GM12878 (cell line): ENCODE measurements at regions of chr12 and their contacts with region 1.

Region 1: GRCh38 chr12:761256-761655 is 8.9 kb downstream of the WNK1 start:
- DNase-seq: no peak
- ATAC-seq: no peak
- H3K4me3 ChIP-seq: peak overlapping the region; percentile 28
- H3K27ac ChIP-seq: no peak overlapping the region
- H3K4me1 ChIP-seq: no peaks in the 10 kb centered on the region; the same call in 1 of the 2 replicates
- H3K27me3 ChIP-seq: no peaks in the 10 kb centered on the region
- CTCF ChIP-seq: no peak
- EP300 ChIP-seq: no peak
- POLR2A ChIP-seq: no peak
- RAD21 ChIP-seq: no peak

Region 2: DNA sequence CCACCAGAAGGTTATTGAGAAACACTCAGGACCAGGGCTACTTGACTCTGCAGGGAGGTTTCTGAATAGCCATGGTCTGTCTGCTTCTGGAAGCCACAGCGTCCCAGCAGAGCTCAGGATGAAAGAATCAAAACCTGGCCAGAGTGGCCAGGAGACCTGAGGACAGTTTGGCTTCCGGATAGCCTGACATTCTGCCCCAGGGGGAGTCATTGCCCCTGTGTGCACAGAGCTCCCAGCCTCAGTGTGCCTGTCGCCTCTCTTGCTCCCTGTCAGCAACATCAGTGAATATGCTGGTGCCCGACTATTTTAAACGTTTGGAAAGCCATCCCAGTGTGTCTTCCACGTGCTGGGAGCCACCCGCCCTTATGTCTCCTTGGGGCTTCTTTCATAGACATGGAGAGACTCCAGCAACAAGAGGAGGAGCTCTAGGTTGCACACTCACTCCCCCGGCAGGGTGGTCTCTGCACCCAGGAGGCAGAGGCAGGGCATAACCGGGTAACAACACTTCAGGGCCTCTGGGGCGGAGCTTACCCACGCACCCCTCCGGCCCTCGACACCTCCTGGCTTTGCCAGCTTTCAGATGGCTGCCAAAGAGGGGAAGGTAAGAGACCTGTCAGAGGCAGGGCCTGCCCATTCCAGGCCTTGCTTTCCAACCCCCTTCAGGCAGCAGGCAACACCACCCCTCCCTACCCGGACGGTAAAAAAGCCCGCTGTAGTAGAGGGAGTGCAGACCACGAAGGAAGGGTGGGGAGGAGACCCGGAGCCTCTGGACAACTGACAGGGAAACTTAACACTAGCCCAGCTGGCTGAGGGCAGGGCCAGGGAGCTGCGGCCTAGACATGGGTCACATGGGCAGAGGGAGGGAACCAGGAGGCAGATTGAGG is 528.3 kb before region 1 on chr12:
- CTCF ChIA-PET with region 1: no interaction called
- POLR2A ChIA-PET with region 1: no interaction called
- RAD21 ChIA-PET with region 1: no interaction called
- SMC1A ChIA-PET with region 1: no interaction called
- in situ Hi-C with region 1: no loop called
- intact Hi-C with region 1: no loop called
- DNase-seq: no peak
- ATAC-seq: no peak
- H3K4me3 ChIP-seq: no peak overlapping the region
- H3K27ac ChIP-seq: no peak overlapping the region
- H3K4me1 ChIP-seq: no peaks in the 10 kb centered on the region
- H3K27me3 ChIP-seq: peaks cover 0 to 1% of the 10 kb centered on the region in 2 experiments; a peak in 1 of 4 replicates
- CTCF ChIP-seq: no peak
- EP300 ChIP-seq: no peak
- POLR2A ChIP-seq: no peak
- RAD21 ChIP-seq: no peak

Region 3: DNA sequence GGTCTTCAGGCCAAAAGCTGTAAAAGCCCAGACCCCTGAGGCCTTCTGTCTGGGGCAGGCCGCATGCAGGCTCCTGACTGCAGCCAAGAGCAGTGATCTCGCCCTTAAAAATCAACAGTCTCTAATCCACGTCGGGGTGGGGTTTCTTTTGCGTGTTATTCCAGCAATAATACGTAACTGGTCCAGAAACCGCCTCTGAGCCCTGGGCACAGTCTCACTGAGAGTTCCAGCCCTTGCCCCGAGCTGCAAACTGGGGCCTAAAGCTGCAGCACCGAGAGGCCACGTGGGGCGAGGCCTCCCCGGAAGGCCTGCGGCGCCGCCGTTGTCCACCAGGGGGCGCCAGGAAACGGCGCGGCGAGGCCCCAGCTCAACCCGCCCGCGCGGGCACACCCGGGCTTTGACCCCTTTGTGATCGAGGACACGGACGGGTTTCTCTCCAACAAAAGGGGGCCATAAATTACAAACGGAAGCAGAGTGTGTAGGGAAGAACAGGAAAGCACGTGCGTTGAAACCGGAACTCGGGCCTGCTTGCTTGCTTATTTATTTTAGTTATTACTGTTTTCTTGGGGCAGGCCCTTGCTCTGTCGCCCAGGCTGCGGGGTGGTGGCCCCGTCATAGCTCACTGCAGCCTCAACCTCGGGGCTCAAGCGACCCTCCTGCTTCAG is 185.2 kb before region 1 on chr12:
- CTCF ChIA-PET with region 1: interaction called, 11 read pairs
- POLR2A ChIA-PET with region 1: no interaction called
- RAD21 ChIA-PET with region 1: interaction called, 7 read pairs
- SMC1A ChIA-PET with region 1: interaction called, 3 read pairs
- in situ Hi-C with region 1: no loop called
- intact Hi-C with region 1: no loop called
- DNase-seq: peak; percentile 40
- ATAC-seq: peak; percentile 99
- H3K4me3 ChIP-seq: no peak overlapping the region
- H3K27ac ChIP-seq: peak overlapping the region; percentile 26
- H3K4me1 ChIP-seq: peaks cover 10% of the 10 kb centered on the region
- H3K27me3 ChIP-seq: no peaks in the 10 kb centered on the region
- CTCF ChIP-seq: peak; percentile 90 to 99 (median 96)
- EP300 ChIP-seq: no peak
- POLR2A ChIP-seq: peak; percentile 59
- RAD21 ChIP-seq: peak; percentile 79

Region 4: GRCh38 chr12:614411-614970 is 146.8 kb before region 1 on chr12:
- CTCF ChIA-PET with region 1: interaction called, 13 read pairs
- POLR2A ChIA-PET with region 1: interaction called, 6 read pairs
- RAD21 ChIA-PET with region 1: interaction called, 9 read pairs
- SMC1A ChIA-PET with region 1: interaction called, 15 read pairs
- in situ Hi-C with region 1: no loop called
- intact Hi-C with region 1: no loop called
- DNase-seq: no peak
- ATAC-seq: peak; percentile 78
- H3K4me3 ChIP-seq: no peak overlapping the region
- H3K27ac ChIP-seq: no peak overlapping the region
- H3K4me1 ChIP-seq: peaks cover 10% of the 10 kb centered on the region
- H3K27me3 ChIP-seq: no peaks in the 10 kb centered on the region
- CTCF ChIP-seq: peak; percentile 61 to 86 (median 63)
- EP300 ChIP-seq: no peak
- POLR2A ChIP-seq: no peak
- RAD21 ChIP-seq: peak; percentile 75

Region 5: GRCh38 chr12:774051-774614 is 12.9 kb after region 1 on chr12:
- CTCF ChIA-PET with region 1: interaction called, 11 read pairs
- POLR2A ChIA-PET with region 1: interaction called, 13 read pairs
- RAD21 ChIA-PET with region 1: interaction called, 7 read pairs
- SMC1A ChIA-PET with region 1: interaction called, 42 read pairs
- in situ Hi-C with region 1: no loop called
- intact Hi-C with region 1: no loop called
- DNase-seq: no peak
- ATAC-seq: 0 out of 3 replicates have a peak, but pooled peaks have one; percentile 12
- H3K4me3 ChIP-seq: no peak overlapping the region
- H3K27ac ChIP-seq: no peak overlapping the region
- H3K4me1 ChIP-seq: peaks cover 4% of the 10 kb centered on the region; the same call in 1 of the 2 replicates
- H3K27me3 ChIP-seq: no peaks in the 10 kb centered on the region
- CTCF ChIP-seq: no peak
- EP300 ChIP-seq: no peak
- POLR2A ChIP-seq: no peak
- RAD21 ChIP-seq: no peak

Region 6: GRCh38 chr12:823028-823698 is 61.9 kb after region 1 on chr12:
- CTCF ChIA-PET with region 1: interaction called, 64 read pairs
- POLR2A ChIA-PET with region 1: no interaction called
- RAD21 ChIA-PET with region 1: interaction called, 4 read pairs
- SMC1A ChIA-PET with region 1: interaction called, 73 read pairs
- in situ Hi-C with region 1: no loop called
- intact Hi-C with region 1: no loop called
- DNase-seq: peak; percentile 82
- ATAC-seq: peak; percentile 99
- H3K4me3 ChIP-seq: peak overlapping the region; percentile 21; the same call in 1 of the 2 replicates
- H3K27ac ChIP-seq: peak overlapping the region; percentile 54
- H3K4me1 ChIP-seq: peaks cover 14% of the 10 kb centered on the region; the same call in 1 of the 2 replicates
- H3K27me3 ChIP-seq: no peaks in the 10 kb centered on the region
- CTCF ChIP-seq: no peak
- EP300 ChIP-seq: peak in 1 of 2 experiments; percentile 82; a peak in 2 of 4 replicates
- POLR2A ChIP-seq: no peak
- RAD21 ChIP-seq: no peak